Mammary epithelial cell (primary cell): ENCODE measurements at regions of chr2 and their contacts with region 1.

Region 1: DNA sequence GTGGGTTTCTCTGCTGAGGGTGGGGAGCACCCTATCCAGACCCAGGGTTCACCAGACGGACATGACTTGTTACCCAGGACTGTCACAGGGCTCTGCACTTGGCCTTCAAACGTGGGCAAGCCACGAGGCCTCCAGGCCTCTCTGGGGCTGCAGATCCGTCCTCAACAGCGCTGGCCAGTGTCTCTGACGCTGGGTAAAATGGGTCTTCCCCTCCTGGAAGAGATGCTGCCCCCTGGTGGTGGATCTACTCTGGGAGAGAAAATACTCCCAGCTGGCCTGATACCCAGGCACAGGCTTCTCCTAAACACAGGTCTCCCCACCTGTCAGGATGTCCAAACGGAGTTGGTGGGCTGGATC is 3.7 kb downstream of the GPR17 start:
- DNase-seq: peak; percentile 64
- H3K4me3 ChIP-seq: no peak overlapping the region
- H3K27ac ChIP-seq: no peak overlapping the region
- H3K4me1 ChIP-seq: peaks cover 4% of the 10 kb centered on the region
- H3K27me3 ChIP-seq: no peaks in the 10 kb centered on the region
- CTCF ChIP-seq: peak; percentile 82 to 90

Region 2: DNA sequence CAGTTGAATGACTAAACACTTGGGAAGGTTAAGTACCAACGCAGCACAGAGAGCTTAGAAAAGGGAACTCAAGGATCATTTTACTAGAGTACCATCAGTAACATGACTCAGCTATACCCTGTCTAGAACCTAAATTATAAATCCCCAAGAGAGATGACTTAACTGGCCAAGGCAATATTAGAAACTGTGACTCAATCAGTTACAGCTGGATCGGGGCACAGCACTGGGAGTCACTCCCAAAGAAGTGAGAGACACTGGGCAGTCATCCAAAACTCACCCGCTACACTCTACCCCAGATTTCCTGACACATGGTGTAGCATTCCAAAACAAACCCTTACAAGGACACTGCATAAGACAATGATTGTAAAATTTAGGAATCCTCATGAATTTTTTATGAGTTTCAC is 141.0 kb before region 1 on chr2:
- CTCF ChIA-PET with region 1: interaction called, 3 read pairs
- dilution Hi-C with region 1: no loop called
- in situ Hi-C with region 1: no loop called
- intact Hi-C with region 1: loop called (anchors 5 kb)
- DNase-seq: peak; percentile 99
- H3K4me3 ChIP-seq: no peak overlapping the region
- H3K27ac ChIP-seq: peak overlapping the region; percentile 68
- H3K4me1 ChIP-seq: peaks cover 16% of the 10 kb centered on the region
- H3K27me3 ChIP-seq: no peaks in the 10 kb centered on the region
- CTCF ChIP-seq: no peak

Region 3: DNA sequence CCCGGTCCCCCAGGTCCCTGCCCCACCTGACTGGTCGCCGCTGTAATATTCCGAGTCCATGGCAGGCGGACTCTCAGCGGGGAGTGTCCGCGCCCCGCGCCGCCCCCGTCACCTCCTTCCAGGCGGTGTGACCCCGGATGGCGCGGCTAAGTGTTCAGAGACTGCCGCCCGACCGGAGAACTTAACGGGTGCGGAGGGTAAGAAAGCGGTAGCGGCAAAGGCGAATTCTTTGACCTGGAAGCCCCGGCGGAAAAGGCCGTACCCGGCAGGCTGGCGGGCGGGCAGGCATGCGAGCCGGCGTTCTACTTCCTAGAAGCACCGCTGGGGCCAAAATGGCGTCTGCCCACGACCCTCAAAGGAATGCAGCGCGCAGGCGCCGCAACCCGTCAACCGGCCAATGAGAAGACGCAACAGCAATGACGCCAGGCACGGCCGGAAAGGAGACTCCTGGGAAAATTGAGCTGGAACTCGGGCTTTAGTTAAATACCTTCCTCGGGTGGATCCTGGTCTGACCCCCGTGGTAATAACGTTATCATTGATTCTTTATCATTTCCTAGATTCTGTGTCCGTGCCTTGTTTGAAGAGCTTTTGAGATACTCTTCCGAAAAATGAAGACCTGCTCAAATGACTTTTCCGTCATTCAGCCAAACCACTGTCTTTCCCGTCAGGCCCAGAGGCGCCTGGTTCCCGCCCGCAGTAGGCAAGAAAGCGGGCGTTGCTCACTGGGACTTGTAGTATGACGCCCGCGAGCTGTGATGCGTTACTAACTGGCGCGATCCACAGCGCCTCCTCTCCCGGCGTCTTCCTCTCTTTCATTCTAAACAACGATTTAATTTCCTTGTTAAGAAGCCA is 123.3 kb before region 1 on chr2 and contains the start of gene IWS1:
- CTCF ChIA-PET with region 1: no interaction called
- dilution Hi-C with region 1: no loop called
- in situ Hi-C with region 1: loop called in 1 of 2 experiments (anchors 10 kb)
- intact Hi-C with region 1: loop called (anchors 1 kb)
- DNase-seq: peak; percentile 94
- H3K4me3 ChIP-seq: peak within 1 kb of the TSS; percentile 64 to 95 (median 67)
- H3K27ac ChIP-seq: peak within 1 kb of the TSS; percentile 98
- H3K4me1 ChIP-seq: peaks cover 16% of the 10 kb centered on the region
- H3K27me3 ChIP-seq: no peaks in the 10 kb centered on the region
- CTCF ChIP-seq: peak in 1 of 2 donors; percentile 23
- total RNA-seq, gene IWS1: 24.7 to 52.5 TPM

Region 4: GRCh38 chr2:127591221-127591923 is 58.3 kb before region 1 on chr2:
- CTCF ChIA-PET with region 1: interaction called, 12 read pairs
- dilution Hi-C with region 1: no loop called
- in situ Hi-C with region 1: no loop called
- intact Hi-C with region 1: loop called (anchors 1 kb)
- DNase-seq: peak; percentile 24
- H3K4me3 ChIP-seq: no peak overlapping the region
- H3K27ac ChIP-seq: no peak overlapping the region
- H3K4me1 ChIP-seq: no peaks in the 10 kb centered on the region
- H3K27me3 ChIP-seq: no peaks in the 10 kb centered on the region
- CTCF ChIP-seq: peak; percentile 86 to 92

Region 5: DNA sequence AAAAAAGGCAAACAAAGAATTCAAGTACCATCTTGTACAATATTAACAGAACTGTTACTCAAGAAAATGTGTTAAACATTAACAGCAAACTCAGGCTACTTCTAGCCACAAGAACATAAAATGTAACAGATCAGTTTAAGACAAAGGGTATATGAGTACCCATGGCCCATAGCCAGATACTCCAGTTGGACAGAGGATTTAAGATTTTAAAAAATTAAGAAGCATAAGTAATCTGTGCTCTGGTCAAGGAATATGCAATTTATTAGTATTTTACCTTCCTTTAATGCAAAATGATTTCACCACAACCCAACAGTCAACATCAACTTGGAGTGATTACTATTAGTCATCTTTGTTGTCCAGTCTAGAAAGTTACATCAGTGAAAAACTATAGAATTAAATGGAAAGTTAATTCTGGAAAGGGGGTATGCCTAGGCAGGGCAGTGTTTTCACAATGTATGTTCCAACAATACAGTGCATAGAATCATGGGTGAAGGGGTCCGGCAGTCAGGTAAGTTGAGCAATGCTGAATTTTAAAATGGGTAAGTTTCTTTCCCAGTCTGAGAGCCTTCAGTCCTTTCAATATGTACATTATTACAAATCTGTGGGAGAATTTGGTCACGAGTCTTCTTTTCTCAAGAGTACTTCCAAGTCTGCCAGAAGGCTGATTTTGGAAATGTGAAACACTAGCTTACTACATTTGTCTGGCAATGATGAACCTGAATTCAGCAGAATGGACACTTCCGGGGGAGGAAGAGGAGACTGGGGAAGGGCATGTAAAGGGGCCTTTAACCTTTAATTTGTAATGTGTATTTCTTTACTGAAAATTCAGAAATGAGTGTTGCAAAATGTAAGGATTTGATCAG is 86.1 kb after region 1 on chr2:
- CTCF ChIA-PET with region 1: no interaction called
- dilution Hi-C with region 1: no loop called
- in situ Hi-C with region 1: no loop called
- intact Hi-C with region 1: no loop called
- DNase-seq: no peak
- H3K4me3 ChIP-seq: no peak overlapping the region
- H3K27ac ChIP-seq: no peak overlapping the region
- H3K4me1 ChIP-seq: no peaks in the 10 kb centered on the region
- H3K27me3 ChIP-seq: no peaks in the 10 kb centered on the region
- CTCF ChIP-seq: no peak